ENCODE measurements at regions of chr17 and their contacts with region 1.

Region 1: DNA sequence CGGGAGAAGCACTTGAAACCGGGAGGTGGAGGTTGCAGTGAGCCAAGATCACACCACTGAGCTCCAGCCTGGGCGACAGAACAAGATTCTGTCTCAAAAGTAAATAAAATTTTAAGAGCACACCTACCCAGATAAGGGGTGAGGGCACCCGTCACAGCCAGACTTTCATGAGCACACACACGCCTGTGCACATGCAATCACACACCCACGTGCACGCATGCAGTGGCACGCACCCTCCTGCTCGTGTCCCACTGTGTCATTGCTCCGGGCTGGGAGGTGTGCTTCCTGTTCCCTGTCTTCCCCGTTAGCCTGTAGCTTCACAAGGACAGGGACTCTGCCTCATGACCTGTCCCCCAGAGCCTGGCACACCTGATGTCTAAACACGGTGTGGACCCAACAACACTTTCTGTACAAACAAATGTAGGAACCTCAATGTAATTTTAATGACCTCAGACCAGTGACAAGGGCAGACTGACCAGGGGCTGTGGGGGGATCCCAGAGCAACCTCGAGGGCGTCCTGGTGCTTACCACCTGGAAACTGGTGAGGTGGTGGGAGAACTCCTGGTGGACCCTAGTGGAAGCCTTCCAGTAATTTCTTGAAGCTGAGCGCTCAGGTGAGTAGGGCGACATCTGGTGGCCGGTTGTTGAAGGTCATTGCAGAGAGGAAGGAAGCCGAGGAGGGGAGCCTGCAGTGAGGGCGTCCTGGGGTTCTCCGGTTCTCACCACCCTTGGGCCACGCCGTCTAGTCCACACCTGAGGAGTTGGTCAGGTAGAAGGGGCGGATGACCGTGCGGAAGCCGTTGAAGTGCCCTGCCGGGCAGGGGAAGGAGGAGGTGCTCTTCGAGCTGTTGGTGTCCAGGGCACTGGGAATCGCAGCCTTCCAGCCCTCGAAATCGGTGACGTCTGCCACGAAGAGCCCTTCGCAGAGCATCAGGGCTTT is 8.6 kb downstream of the LGALS3BP start:
- DNase-seq: peak; percentile 79 to 89
- ATAC-seq: peak; percentile 56 to 69 (median 62)
- H3K4me3 ChIP-seq: no peak overlapping the region
- H3K27ac ChIP-seq: no peak overlapping the region
- H3K4me1 ChIP-seq: peaks cover 15% of the 10 kb centered on the region
- H3K27me3 ChIP-seq: no peaks in the 10 kb centered on the region
- CTCF ChIP-seq: peak; percentile 86

Region 2: DNA sequence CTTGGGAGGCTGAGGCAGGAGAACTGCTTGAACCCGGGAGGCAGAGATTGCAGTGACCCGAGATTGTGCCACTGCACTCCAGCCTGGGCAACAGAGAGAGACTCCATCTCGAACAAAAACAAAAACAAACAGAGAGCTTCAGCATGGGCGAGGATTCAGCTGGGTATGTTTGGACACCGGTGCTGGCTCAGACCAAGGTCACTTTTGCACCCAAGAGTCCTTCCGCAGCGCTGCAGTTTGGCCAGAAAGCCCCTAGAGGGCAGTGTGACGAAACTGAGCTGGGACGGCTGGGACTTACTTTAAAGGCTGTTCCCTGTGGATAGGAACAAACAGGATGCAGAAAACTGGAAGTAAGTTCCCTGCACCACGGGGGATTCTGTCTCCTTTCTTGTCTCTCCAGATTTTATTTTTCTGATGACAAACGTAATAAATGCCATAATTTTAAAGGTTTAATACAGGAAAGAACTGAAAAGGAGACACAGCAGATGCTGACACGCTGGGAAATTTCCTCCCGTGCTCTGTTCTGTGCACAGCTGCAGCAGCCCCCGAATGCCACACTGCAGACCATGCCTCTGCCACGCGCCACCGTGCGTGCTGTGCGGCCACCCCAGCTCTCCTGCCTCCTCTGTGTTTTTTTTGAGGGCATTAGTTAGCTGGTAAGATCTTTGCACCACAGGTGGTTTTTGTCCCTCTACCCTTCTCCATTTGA is 105.3 kb before region 1 on chr17:
- intact Hi-C with region 1: loop called (anchors 1 kb)
- DNase-seq: peak; percentile 82 to 88
- ATAC-seq: peak; percentile 70 to 85 (median 76)
- H3K4me3 ChIP-seq: peak overlapping the region; percentile 16
- H3K27ac ChIP-seq: no peak overlapping the region
- H3K4me1 ChIP-seq: peaks cover 7% of the 10 kb centered on the region
- H3K27me3 ChIP-seq: no peaks in the 10 kb centered on the region
- CTCF ChIP-seq: peak; percentile 93

Region 3: GRCh38 chr17:78890498-78890897 is 80.6 kb before region 1 on chr17:
- intact Hi-C with region 1: no loop called
- DNase-seq: peak; percentile 54 to 71
- ATAC-seq: no peak
- H3K4me3 ChIP-seq: no peak overlapping the region
- H3K27ac ChIP-seq: peak overlapping the region; percentile 10
- H3K4me1 ChIP-seq: peaks cover 17% of the 10 kb centered on the region
- H3K27me3 ChIP-seq: no peaks in the 10 kb centered on the region
- CTCF ChIP-seq: no peak

Region 4: DNA sequence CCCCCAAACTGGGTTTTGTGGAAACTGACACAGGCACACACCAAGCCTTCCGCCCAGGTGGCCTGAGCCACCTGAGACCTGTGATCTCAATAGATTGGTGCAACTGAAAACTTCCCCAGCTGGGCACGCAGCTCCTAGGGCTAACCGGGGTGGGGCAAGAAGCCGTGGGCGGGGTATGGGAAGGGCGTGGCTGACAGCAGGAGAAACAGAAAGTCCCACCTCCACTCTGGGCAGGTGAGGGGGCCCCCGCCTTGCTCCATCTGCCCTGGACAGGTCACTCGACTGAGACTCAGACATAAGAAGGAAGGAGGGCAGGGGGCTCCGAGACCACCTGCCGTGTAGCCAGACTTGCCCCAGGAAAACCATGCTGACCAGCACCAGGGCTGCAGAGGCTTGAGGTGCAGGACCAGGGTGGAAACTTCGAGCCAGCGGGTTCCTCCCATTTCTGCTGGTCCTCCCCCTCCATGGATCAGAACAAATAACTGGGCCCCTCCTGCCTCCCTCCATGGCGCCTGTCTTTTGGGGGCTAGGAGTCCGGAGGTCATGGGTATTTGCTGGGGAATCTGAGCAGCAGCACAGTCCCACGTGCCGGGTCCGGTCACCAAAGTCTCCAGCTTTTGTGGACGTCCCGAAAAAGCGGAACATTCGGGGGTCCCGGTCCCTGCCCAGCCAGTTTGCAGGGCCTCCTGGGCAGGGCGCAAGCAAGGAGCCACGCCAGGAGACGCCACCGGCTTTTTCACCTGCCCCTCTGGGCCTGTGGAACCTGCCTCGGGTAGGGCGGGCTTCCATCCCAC is 47.2 kb before region 1 on chr17:
- intact Hi-C with region 1: no loop called
- DNase-seq: peak; percentile 47 to 70
- ATAC-seq: no peak
- H3K4me3 ChIP-seq: peak overlapping the region; percentile 70
- H3K27ac ChIP-seq: peak overlapping the region; percentile 79
- H3K4me1 ChIP-seq: peaks cover 11% of the 10 kb centered on the region
- H3K27me3 ChIP-seq: peaks cover 0 to 11% (median 2%) of the 10 kb centered on the region in 3 donors
- CTCF ChIP-seq: no peak